Sigmoid colon (tissue), 7 donors: ENCODE measurements at regions of chr4 and their contacts with region 1.

Region 1: DNA sequence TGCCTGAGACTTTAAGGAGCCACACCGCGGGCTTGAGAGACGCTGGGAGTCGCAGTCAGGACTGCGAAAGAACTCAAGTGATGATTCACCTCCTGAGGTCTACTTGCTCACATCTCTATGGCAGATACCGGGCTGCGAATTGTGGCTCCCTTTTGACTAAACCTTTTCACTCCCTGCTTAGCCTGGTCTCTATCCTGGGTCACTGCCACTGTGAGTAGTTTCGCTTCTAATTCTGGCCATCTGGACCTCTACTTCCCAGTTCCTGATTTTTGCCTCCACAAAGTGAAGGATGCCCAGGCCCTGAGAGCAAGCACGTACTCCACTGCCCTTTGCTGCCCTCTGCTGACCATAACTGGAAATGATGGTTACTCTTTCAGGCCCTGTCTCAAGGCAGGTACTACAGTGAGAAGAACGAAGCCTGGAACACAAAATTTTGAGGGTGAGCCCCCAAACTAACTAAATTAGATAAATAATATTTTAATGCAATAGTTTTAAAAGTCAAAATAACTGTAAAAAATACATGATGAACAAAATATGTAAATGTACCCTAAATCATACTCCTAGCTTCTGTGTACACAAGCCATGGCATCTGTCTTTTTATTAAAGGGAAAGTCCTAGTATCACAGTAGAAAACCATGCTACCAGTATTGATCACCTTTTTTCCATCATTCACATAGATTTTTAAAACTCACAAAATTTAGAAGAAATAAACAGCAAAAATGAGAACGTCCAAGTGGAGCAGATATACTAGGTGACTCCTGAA is 16.7 kb downstream of the MAD2L1 start:
- DNase-seq: peak; percentile 93
- H3K4me3 ChIP-seq: peak overlapping the region; percentile 28 to 49 (median 42)
- H3K27ac ChIP-seq: peak overlapping the region; percentile 80 to 85 (median 82)
- H3K4me1 ChIP-seq: peaks cover 0 to 28% (median 13%) of the 10 kb centered on the region in 4 donors
- H3K27me3 ChIP-seq: no peaks in the 10 kb centered on the region
- CTCF ChIP-seq: peak; percentile 78 to 87 (median 82)
- EP300 ChIP-seq: no peak
- POLR2A ChIP-seq: no peak

Region 2: DNA sequence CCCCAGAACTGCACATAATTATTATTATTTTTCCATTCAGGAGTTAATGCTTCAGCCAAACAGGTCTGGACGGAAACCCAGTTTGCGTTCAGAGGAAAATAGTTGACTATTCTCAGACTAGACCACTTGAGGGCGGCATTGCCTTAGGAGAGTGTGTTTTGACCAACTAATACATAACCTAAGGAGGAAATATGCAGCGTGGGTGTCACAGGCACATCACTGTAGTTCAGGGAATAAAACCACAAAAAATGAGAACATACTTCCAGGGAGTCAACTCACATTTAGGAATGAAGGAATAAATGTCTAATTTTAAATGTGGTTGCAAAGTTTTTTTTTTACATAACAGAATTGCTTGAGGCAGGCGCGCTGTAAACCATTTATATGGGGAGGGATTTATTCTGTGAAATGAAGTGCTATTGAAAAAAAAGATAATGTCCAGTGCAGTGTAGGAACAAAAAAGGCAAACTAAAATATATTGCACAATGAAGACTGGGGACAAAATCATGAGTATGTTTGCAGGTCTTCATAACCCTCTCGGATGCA is 1068.0 kb before region 1 on chr4:
- intact Hi-C with region 1: loop called (anchors 10 kb)
- DNase-seq: peak; percentile 86
- H3K4me3 ChIP-seq: peak overlapping the region in 3 of 4 donors; percentile 12 to 17 (median 15)
- H3K27ac ChIP-seq: peak overlapping the region; percentile 84 to 90 (median 87)
- H3K4me1 ChIP-seq: peaks cover 0 to 91% (median 67%) of the 10 kb centered on the region in 4 donors
- H3K27me3 ChIP-seq: no peaks in the 10 kb centered on the region
- CTCF ChIP-seq: peak; percentile 63 to 90 (median 73)
- EP300 ChIP-seq: no peak
- POLR2A ChIP-seq: no peak

Region 3: DNA sequence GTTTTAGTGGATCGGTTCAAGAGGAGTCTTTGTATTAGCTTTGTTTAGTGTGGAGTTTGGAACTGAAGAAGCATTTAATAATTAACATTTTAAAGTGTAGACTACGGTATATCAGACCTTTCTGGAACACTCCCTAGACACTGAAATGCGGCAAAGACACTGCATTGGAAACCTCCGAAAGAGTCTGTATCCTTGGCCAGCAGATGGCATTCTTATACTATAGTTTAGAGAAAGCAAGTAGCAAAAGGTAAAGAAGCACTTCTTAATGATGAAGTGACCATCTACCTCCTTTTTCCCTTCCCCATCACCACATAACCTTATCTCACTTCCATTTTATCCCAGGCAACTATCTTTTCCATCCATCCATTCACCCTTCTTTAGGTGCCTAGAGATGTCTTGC is 735.6 kb before region 1 on chr4:
- intact Hi-C with region 1: loop called (anchors 2 kb)
- DNase-seq: no peak
- H3K4me3 ChIP-seq: no peak overlapping the region
- H3K27ac ChIP-seq: no peak overlapping the region
- H3K4me1 ChIP-seq: no peaks in the 10 kb centered on the region
- H3K27me3 ChIP-seq: no peaks in the 10 kb centered on the region
- CTCF ChIP-seq: peak in 2 of 4 experiments; percentile 18 to 19
- EP300 ChIP-seq: no peak
- POLR2A ChIP-seq: no peak

Region 4: DNA sequence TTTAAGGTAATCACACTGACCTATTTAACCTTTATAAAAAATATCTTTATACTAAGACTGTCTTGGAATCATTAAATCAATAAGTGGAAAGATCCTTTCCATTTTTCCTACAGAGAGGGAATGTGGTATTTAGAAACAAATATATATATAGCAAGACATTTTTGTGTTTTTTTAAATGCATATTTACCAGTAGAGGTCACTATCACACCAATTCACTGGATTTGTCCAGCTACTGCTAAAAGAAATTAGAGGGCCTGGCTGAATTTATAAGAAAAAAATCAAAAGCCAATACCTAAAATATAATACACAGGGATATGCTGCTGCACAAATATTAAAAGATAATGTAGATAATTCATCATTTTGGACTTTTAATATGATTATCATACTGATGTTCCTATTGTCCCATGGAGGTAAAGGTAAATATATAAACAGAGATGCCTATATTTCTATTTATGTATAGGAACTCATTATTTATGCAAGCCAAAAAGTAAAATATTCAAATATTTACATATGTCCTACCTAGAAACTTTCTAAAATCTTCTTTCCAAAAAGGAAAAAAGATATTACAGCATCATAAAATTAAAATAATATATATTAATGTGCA is 490.8 kb before region 1 on chr4:
- intact Hi-C with region 1: loop called (anchors 2 kb)
- DNase-seq: no peak
- H3K4me3 ChIP-seq: no peak overlapping the region
- H3K27ac ChIP-seq: peak overlapping the region in 2 of 4 donors; percentile 38 to 40
- H3K4me1 ChIP-seq: peaks cover 0 to 15% (median 6%) of the 10 kb centered on the region in 4 donors
- H3K27me3 ChIP-seq: no peaks in the 10 kb centered on the region
- CTCF ChIP-seq: peak; percentile 35 to 61 (median 40)
- EP300 ChIP-seq: no peak
- POLR2A ChIP-seq: no peak

Region 5: DNA sequence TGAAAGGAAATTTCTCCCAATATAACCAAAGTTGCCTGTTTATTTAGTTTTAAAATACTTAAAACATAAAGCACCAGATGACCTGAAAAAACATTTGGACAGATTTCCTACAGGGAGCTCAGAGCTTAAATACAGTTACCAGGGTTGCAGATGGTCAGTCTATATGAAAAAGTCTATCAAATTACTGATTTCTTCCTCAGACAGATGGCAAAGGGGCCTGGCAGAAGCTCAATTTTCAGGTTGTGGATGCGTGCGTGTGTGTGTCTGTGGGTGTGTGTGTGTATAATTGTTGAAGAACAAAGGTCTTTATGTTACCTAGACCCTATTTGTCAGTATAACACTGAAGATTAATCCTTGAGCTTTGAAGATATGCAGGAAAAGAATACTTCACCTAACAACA is 152.7 kb before region 1 on chr4:
- intact Hi-C with region 1: loop called (anchors 5 kb)
- DNase-seq: no peak
- H3K4me3 ChIP-seq: no peak overlapping the region
- H3K27ac ChIP-seq: no peak overlapping the region
- H3K4me1 ChIP-seq: peaks cover 0 to 31% (median 12%) of the 10 kb centered on the region in 4 donors
- H3K27me3 ChIP-seq: no peaks in the 10 kb centered on the region
- CTCF ChIP-seq: no peak
- EP300 ChIP-seq: no peak
- POLR2A ChIP-seq: no peak

Region 6: DNA sequence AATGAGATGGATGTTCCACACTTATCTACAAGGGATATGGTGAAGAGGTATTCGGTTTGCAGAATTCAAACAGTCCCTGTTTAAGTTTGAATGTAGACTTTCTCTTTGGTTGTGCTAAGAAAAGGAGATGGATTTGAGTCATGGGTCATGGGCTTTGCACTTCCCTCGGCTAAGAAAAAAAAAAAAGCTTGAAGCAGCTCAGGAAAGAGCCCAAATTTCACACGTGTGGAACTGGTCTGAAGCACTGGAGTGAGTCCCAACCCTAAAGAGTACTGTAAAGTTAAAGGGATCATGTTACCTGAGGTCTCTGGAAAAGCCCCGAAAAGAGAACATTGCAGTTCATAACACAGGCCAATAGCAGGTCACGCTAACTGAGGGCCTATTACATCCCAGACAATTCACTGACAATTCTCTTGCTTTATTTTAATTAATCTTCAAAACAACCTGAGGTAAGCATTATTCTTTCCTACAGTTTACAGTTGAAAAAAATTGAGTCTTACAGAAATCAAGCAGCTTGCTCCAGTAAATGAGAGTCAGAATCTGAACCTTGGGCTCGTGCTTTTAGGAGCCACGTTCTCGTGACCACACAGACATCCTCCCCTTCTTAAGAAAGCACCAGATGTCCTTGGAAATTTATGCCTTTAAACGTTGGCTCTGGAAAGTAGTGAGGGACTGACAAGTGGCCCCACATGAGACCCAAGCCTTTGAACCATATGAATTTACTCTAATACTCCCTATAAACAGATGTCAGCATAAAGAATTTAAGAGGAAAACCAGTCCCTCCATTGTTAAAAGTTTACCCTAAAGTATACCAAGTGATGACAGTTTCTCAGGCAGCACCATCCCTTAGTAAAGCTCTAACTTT is 72.6 kb before region 1 on chr4:
- intact Hi-C with region 1: loop called (anchors 2 kb)
- DNase-seq: peak; percentile 75
- H3K4me3 ChIP-seq: no peak overlapping the region
- H3K27ac ChIP-seq: peak overlapping the region; percentile 53 to 85 (median 80)
- H3K4me1 ChIP-seq: peaks cover 0 to 66% (median 29%) of the 10 kb centered on the region in 4 donors
- H3K27me3 ChIP-seq: no peaks in the 10 kb centered on the region
- CTCF ChIP-seq: no peak
- EP300 ChIP-seq: peak; percentile 80 to 90 (median 87)
- POLR2A ChIP-seq: no peak